Activated naive CD4-positive, alpha-beta T cell treated with anti-CD3 and anti-CD28 coated beads for 36 hours (primary cell): ENCODE measurements at regions of chr3 and their contacts with region 1.

Region 1: GRCh38 chr3:50292159-50293078 is at the start of gene IFRD2:
- DNase-seq: peak; percentile 98
- H3K4me3 Mint-ChIP-seq: peak within 1 kb of the TSS; percentile 91
- H3K27ac Mint-ChIP-seq: peak within 1 kb of the TSS; percentile 88
- H3K4me1 Mint-ChIP-seq: peaks cover 24% of the 10 kb centered on the region
- H3K27me3 Mint-ChIP-seq: no peaks in the 10 kb centered on the region
- total RNA-seq, gene IFRD2: 117 to 125 TPM

Region 2: GRCh38 chr3:49387721-49388120 is 904.7 kb before region 1 on chr3:
- CTCF ChIA-PET with region 1: no interaction called
- intact Hi-C with region 1: no loop called
- DNase-seq: no peak
- H3K4me3 Mint-ChIP-seq: no peak overlapping the region
- H3K27ac Mint-ChIP-seq: peak overlapping the region; percentile 50
- H3K4me1 Mint-ChIP-seq: peaks cover 50% of the 10 kb centered on the region
- H3K27me3 Mint-ChIP-seq: no peaks in the 10 kb centered on the region

Region 3: DNA sequence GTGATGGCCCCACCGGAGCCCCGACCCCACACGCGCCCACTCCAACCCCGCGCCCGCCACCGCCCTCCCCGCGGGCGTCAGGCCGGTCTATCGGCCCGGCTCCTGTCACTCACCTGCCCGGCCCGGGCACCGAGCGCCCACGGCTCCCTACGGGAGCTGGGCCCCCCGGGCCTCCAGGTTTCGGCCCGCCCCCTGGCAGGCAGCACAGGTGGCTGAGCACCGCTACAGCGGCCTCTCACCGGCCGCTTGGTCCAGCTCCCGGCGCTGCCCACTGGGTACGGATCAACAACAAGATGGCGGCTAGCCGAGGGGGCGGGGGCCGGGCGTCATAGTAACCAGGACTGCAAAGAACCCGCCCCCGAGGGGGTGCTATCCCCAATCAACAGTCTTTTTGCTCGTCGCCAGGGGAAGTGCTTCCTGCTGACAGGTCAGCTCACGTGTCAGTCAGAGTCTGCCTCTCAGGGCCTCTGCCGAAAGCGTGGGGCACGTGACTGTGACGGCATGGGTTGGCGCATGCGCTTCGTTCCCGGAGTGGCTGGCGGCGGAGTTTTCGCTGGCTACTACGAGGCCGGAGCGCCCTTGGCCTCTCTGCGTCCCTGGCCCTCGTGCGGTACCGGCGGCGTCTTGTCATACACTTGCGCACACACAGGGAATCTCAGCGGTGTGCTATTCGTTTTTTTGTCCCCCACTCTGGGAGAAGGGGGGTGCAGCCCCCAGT is 506.0 kb before region 1 on chr3 and contains the start of gene IP6K1:
- CTCF ChIA-PET with region 1: no interaction called
- intact Hi-C with region 1: loop called (anchors 1 kb)
- DNase-seq: peak; percentile 100
- H3K4me3 Mint-ChIP-seq: peak within 1 kb of the TSS; percentile 83
- H3K27ac Mint-ChIP-seq: peak within 1 kb of the TSS; percentile 86
- H3K4me1 Mint-ChIP-seq: peaks cover 30% of the 10 kb centered on the region
- H3K27me3 Mint-ChIP-seq: no peaks in the 10 kb centered on the region
- total RNA-seq, gene IP6K1: 18.3 to 20.3 TPM

Region 4: GRCh38 chr3:50245831-50246516 is 46.4 kb before region 1 on chr3:
- CTCF ChIA-PET with region 1: interaction called, 11 read pairs
- intact Hi-C with region 1: no loop called
- DNase-seq: peak; percentile 97
- H3K4me3 Mint-ChIP-seq: peak overlapping the region; percentile 81
- H3K27ac Mint-ChIP-seq: peak overlapping the region; percentile 95
- H3K4me1 Mint-ChIP-seq: peaks cover 82% of the 10 kb centered on the region
- H3K27me3 Mint-ChIP-seq: no peaks in the 10 kb centered on the region

Region 5: GRCh38 chr3:50314342-50314741 is 21.9 kb after region 1 on chr3:
- CTCF ChIA-PET with region 1: no interaction called
- intact Hi-C with region 1: no loop called
- DNase-seq: no peak
- H3K4me3 Mint-ChIP-seq: no peak overlapping the region
- H3K27ac Mint-ChIP-seq: no peak overlapping the region
- H3K4me1 Mint-ChIP-seq: peaks cover 19% of the 10 kb centered on the region
- H3K27me3 Mint-ChIP-seq: no peaks in the 10 kb centered on the region

Region 6: DNA sequence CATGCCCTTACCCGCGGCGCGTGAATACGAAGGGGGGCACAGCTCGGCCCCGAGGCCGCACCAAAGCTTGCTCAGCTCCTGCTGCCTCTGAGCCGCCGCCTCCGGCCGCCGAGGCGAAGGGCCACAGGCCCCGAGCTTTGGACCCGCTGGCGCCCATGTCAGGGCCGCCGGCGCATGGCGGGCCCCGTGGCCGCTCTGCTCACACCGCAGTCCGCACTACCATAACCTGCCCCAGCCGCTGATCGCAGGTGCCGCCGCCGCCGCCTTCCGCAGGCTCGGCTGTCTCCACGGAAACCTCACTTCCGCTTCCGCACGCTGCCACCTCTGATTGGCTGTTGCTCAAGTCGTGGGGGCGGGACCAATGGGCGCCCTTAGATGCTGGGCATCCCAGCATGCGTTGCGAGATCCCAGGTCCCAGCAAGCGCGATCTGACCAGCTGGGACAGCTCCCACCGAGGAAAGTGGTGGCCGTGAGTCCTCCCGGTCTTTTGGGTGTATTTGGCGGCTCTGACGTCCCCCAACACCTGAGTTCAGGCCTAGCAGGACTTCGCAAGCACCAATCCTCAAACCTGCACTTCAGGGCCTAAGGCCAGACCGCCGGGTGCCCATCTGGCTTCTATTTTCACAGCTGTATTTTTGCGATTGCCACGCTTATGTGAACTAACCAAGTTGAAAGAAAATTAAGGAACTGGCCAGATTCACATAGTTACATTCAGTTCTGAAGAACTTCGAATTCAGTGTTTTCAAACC is 35.7 kb after region 1 on chr3 and contains the start of gene TUSC2:
- CTCF ChIA-PET with region 1: interaction called, 13 read pairs
- intact Hi-C with region 1: loop called (anchors 1 kb)
- DNase-seq: peak; percentile 98
- H3K4me3 Mint-ChIP-seq: peak within 1 kb of the TSS; percentile 88
- H3K27ac Mint-ChIP-seq: peak within 1 kb of the TSS; percentile 80
- H3K4me1 Mint-ChIP-seq: peaks cover 16% of the 10 kb centered on the region
- H3K27me3 Mint-ChIP-seq: no peaks in the 10 kb centered on the region
- total RNA-seq, gene TUSC2: 14.1 to 14.4 TPM

Region 7: GRCh38 chr3:50350527-50351322 is 58.3 kb after region 1 on chr3 and contains the starts of genes CYB561D2 and NPRL2:
- CTCF ChIA-PET with region 1: no interaction called
- intact Hi-C with region 1: loop called (anchors 1 kb)
- DNase-seq: peak; percentile 99
- H3K4me3 Mint-ChIP-seq: peak within 1 kb of the TSS; percentile 97
- H3K27ac Mint-ChIP-seq: peak within 1 kb of the TSS; percentile 97
- H3K4me1 Mint-ChIP-seq: peaks cover 59% of the 10 kb centered on the region
- H3K27me3 Mint-ChIP-seq: no peaks in the 10 kb centered on the region
- total RNA-seq, gene CYB561D2: 11.0 to 11.3 TPM
- total RNA-seq, gene NPRL2: 27.7 to 31.3 TPM

Region 8: GRCh38 chr3:50396488-50396887 is 104.1 kb after region 1 on chr3:
- CTCF ChIA-PET with region 1: no interaction called
- intact Hi-C with region 1: no loop called
- DNase-seq: no peak
- H3K4me3 Mint-ChIP-seq: no peak overlapping the region
- H3K27ac Mint-ChIP-seq: no peak overlapping the region
- H3K4me1 Mint-ChIP-seq: no peaks in the 10 kb centered on the region
- H3K27me3 Mint-ChIP-seq: no peaks in the 10 kb centered on the region